Endothelial cell of umbilical vein (primary cell): ENCODE measurements at regions of chr2 and their contacts with region 1.

Region 1: GRCh38 chr2:142843731-142844130 is 33.7 kb upstream of the KYNU start:
- DNase-seq: peak; percentile 92
- H3K4me3 ChIP-seq: no peak overlapping the region
- H3K27ac ChIP-seq: peak overlapping the region; percentile 58
- H3K4me1 ChIP-seq: peaks cover 44% of the 10 kb centered on the region
- H3K27me3 ChIP-seq: no peaks in the 10 kb centered on the region
- CTCF ChIP-seq: no peak
- POLR2A ChIP-seq: no peak

Region 2: DNA sequence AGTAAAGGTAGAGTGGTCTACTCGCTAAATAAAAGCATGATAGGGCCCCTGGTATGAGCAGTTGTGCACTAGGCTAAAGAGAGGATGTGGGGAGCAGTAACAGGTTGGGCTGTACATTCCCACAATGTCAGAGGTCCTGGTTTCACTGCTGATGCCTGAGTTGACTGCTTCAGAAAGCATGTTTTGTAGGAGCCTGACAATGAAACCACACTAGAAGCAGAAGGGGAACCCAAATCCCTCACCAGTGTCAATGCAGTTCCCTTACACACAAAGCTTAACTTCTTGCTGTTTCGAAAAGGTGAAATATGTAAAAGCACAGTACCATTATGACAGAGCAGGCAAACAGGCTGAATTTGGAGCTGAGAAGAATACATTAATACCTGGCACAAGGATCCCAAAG is 257.9 kb before region 1 on chr2:
- CTCF ChIA-PET with region 1: no interaction called
- POLR2A ChIA-PET with region 1: no interaction called
- dilution Hi-C with region 1: no loop called
- intact Hi-C with region 1: no loop called
- DNase-seq: no peak
- H3K4me3 ChIP-seq: no peak overlapping the region
- H3K27ac ChIP-seq: no peak overlapping the region
- H3K4me1 ChIP-seq: no peaks in the 10 kb centered on the region
- H3K27me3 ChIP-seq: no peaks in the 10 kb centered on the region
- CTCF ChIP-seq: no peak
- POLR2A ChIP-seq: no peak

Region 3: GRCh38 chr2:142734770-142735169 is 109.0 kb before region 1 on chr2:
- CTCF ChIA-PET with region 1: no interaction called
- POLR2A ChIA-PET with region 1: no interaction called
- dilution Hi-C with region 1: no loop called
- intact Hi-C with region 1: loop called (anchors 5 kb)
- DNase-seq: no peak
- H3K4me3 ChIP-seq: no peak overlapping the region
- H3K27ac ChIP-seq: no peak overlapping the region
- H3K4me1 ChIP-seq: peaks cover 3% of the 10 kb centered on the region
- H3K27me3 ChIP-seq: no peaks in the 10 kb centered on the region
- CTCF ChIP-seq: no peak
- POLR2A ChIP-seq: no peak

Region 4: GRCh38 chr2:142877216-142877756 is 33.6 kb after region 1 on chr2 and contains the start of gene KYNU:
- CTCF ChIA-PET with region 1: interaction called, 3 read pairs
- POLR2A ChIA-PET with region 1: interaction called, 3 read pairs
- dilution Hi-C with region 1: no loop called
- intact Hi-C with region 1: loop called (anchors 1 kb)
- DNase-seq: no peak
- H3K4me3 ChIP-seq: no peak within 1 kb of the TSS
- H3K27ac ChIP-seq: no peak within 1 kb of the TSS
- H3K4me1 ChIP-seq: peaks cover 23% of the 10 kb centered on the region
- H3K27me3 ChIP-seq: no peaks in the 10 kb centered on the region
- CTCF ChIP-seq: no peak
- POLR2A ChIP-seq: no peak
- total RNA-seq, gene KYNU: 0.25 TPM in 1 of 2 replicates, not detected in the other